B cell (primary cell): ENCODE measurements at regions of chr4 and their contacts with region 1.

Region 1: DNA sequence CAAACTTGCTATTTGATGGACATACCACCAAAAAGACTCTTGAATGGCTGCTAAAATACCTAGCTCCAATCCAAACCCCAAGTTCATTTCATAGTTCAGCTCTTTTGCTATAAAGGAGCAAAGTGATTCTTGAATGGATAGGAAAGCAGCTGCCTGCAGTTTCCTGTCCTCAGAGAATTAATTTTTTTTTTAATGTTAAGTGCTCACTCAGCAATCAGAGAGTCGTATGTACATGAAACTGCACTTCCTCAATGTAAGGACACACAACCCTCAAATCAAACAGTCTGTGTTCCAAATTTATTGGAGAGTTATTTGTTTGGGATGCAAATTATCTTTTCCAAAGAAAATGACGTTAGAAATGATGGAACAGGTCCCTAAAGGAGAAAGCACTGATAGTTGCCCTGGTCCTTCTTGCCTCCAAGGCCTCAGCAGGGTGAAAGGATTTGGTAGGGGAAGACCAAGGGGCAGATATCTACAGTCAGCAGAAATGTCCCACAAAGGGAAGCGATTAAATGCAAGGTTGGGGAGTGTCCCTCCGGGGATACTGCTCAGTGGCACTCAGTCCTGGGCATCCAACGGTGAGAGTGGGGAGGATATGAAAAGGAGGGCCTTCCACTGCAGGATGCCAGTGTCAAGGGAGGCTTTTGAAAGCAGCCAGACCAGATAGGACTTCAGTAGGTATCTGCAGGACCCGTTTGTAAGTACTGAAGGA is 67.2 kb upstream of the RASGEF1B start:
- DNase-seq: peak; percentile 15
- ATAC-seq: no peak
- H3K4me3 ChIP-seq: no peak overlapping the region
- H3K4me3 Mint-ChIP-seq: no peak overlapping the region
- H3K27ac ChIP-seq: peak overlapping the region in 1 of 2 donors; percentile 4
- H3K27ac Mint-ChIP-seq: no peak overlapping the region
- H3K4me1 ChIP-seq: peaks cover 8 to 9% of the 10 kb centered on the region in 2 donors
- H3K4me1 Mint-ChIP-seq: peaks cover 9% of the 10 kb centered on the region
- H3K27me3 ChIP-seq: no peaks in the 10 kb centered on the region
- H3K27me3 Mint-ChIP-seq: no peaks in the 10 kb centered on the region
- CTCF ChIP-seq: no peak

Region 2: GRCh38 chr4:81555489-81555888 is 16.6 kb after region 1 on chr4:
- CTCF ChIA-PET with region 1: no interaction called
- POLR2A ChIA-PET with region 1: no interaction called
- intact Hi-C with region 1: loop called (anchors 2 kb)
- DNase-seq: no peak
- ATAC-seq: no peak
- H3K4me3 ChIP-seq: no peak overlapping the region
- H3K4me3 Mint-ChIP-seq: no peak overlapping the region
- H3K27ac ChIP-seq: no peak overlapping the region
- H3K27ac Mint-ChIP-seq: no peak overlapping the region
- H3K4me1 ChIP-seq: peaks cover 18 to 25% of the 10 kb centered on the region in 2 donors
- H3K4me1 Mint-ChIP-seq: peaks cover 52% of the 10 kb centered on the region
- H3K27me3 ChIP-seq: no peaks in the 10 kb centered on the region
- H3K27me3 Mint-ChIP-seq: no peaks in the 10 kb centered on the region
- CTCF ChIP-seq: no peak